ENCODE measurements at regions of chr4 and their contacts with region 1.

Region 1: DNA sequence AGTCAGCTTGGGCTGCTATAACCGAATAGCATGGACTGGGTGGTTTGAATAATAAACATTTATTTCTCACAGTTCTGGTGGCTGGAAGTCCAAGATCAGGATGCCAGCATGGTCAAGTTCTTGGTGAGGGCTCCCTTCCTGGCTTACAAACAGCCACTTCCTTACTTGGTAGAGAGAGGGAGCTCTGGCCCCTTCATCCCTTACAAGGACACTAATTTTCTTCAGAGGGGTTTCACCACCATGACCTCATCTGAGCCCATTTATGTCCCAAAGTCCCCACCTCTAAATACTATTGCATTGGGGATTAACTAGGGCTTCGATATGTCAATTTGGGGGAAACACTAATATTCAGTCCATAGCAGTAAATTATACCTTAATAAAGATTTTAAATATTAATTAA is 61.8 kb downstream of the CLNK start:
- DNase-seq: peak; percentile 21
- H3K4me3 ChIP-seq: no peak overlapping the region
- H3K27ac ChIP-seq: no peak overlapping the region
- H3K4me1 ChIP-seq: no peaks in the 10 kb centered on the region
- CTCF ChIP-seq: peak; percentile 69

Region 2: DNA sequence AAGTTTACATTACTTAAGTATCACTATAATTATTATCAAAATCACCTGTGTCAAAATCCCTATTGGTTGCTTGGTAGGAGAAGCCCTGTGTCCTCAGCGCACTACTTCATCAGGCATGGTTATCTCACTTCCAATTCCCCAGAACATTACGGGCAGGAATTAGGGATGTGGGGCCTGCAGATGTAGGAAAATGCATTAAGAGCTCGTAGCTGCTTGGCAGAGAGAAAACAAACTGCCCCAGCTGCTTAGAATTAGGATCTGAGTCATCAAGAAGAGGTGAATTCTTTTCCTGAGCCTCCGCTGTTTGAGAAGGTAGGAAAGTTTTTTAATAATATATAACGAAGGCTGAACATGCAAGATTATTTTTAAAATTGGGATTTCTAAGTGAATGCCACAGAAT is 93.0 kb after region 1 on chr4:
- CTCF ChIA-PET with region 1: no interaction called
- POLR2A ChIA-PET with region 1: no interaction called
- intact Hi-C with region 1: loop called (anchors 10 kb)
- DNase-seq: no peak
- H3K4me3 ChIP-seq: no peak overlapping the region
- H3K27ac ChIP-seq: no peak overlapping the region
- H3K4me1 ChIP-seq: no peaks in the 10 kb centered on the region
- CTCF ChIP-seq: no peak